A673 (cell line): ENCODE measurements at regions of chr14 and their contacts with region 1.

Region 1: GRCh38 chr14:53109105-53110041 is 43.8 kb downstream of the DDHD1 start:
- DNase-seq: peak; percentile 46
- H3K4me3 ChIP-seq: peak overlapping the region; percentile 32
- H3K27ac ChIP-seq: peak overlapping the region; percentile 70
- H3K4me1 ChIP-seq: peaks cover 10% of the 10 kb centered on the region
- H3K27me3 ChIP-seq: no peaks in the 10 kb centered on the region
- CTCF ChIP-seq: no peak

Region 2: DNA sequence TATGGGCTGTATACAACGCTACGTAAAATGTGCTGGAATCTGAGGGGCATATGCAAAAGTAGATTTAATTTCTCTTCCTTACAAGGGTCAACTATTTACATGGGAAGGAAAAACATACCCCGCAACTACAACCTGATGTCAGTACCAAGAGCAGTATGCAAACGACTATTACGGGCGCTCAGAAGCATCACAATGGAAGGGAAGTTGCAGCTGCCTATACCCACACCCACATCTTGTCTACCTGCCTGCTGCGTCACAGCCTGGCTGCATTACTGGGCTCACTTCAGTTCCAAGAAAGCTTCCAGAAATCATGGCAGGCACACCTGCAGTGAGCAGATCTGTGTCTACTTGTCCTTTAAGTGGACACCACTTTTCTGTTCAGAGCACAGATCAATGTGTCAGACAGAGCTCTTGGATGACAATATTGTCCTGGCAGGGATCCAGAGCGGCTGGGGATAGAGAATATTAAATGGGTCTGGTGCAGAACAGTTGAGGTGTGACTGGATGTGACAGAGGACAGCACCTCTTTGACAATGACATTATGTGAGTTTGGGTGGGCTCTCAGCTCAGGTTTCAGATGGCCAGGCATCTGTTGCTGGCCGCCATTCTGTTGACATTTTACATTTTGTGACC is 1290.5 kb before region 1 on chr14:
- CTCF ChIA-PET with region 1: no interaction called
- POLR2A ChIA-PET with region 1: no interaction called
- intact Hi-C with region 1: no loop called
- DNase-seq: no peak
- H3K4me3 ChIP-seq: no peak overlapping the region
- H3K27ac ChIP-seq: no peak overlapping the region
- H3K4me1 ChIP-seq: no peaks in the 10 kb centered on the region
- H3K27me3 ChIP-seq: no peaks in the 10 kb centered on the region
- CTCF ChIP-seq: no peak

Region 3: GRCh38 chr14:53137568-53138203 is 28.3 kb after region 1 on chr14:
- CTCF ChIA-PET with region 1: no interaction called
- POLR2A ChIA-PET with region 1: interaction called, 10 read pairs
- intact Hi-C with region 1: no loop called
- DNase-seq: no peak
- H3K4me3 ChIP-seq: no peak overlapping the region
- H3K27ac ChIP-seq: no peak overlapping the region
- H3K4me1 ChIP-seq: no peaks in the 10 kb centered on the region
- H3K27me3 ChIP-seq: no peaks in the 10 kb centered on the region
- CTCF ChIP-seq: no peak

Region 4: DNA sequence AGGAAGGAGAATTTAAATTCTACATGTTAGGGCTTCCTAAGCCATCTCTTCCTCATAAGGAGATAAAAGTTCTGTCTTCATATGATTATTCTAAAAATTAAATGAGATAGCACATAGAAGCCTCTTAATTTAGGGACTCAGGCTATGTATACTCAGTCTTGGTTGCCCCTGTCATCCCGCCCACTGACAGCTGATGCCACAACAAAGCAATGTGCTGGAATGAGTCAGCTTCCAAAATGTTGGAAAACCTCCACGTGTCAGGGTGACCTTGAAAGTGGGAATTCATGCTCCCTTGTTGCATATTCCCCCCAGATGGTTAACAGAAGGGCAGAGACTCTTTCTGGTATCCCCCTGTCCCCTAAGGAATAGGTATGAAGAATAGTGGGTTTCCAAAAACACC is 281.8 kb after region 1 on chr14:
- CTCF ChIA-PET with region 1: no interaction called
- POLR2A ChIA-PET with region 1: no interaction called
- intact Hi-C with region 1: no loop called
- DNase-seq: peak; percentile 6
- H3K4me3 ChIP-seq: no peak overlapping the region
- H3K27ac ChIP-seq: no peak overlapping the region
- H3K4me1 ChIP-seq: no peaks in the 10 kb centered on the region
- H3K27me3 ChIP-seq: peaks cover 28% of the 10 kb centered on the region
- CTCF ChIP-seq: no peak